ENCODE measurements at regions of chr18 and their contacts with region 1.

Region 1: DNA sequence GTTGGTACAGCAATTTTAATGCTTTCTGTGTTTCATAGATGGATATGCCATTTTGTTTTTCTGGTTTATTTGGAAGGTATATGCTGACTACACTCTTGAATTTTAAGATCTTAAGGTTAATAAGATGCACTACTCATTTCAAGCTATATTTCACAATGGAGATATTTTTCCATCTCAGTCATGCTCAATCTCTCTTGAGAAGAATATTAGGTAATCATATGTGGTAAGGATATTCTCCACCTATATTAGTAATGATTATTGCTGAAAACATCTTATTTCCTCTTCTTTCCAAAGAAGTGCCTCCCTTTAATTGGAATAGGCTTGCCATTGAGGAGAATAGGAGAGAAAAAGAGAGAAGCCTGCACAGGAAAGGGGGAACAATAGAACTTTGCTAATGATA is 40.1 kb downstream of the EPB41L3 start:
- DNase-seq: no peak
- ATAC-seq: no peak
- H3K4me3 ChIP-seq: no peak overlapping the region
- H3K27ac ChIP-seq: no peak overlapping the region
- H3K4me1 ChIP-seq: peaks cover 0 to 15% (median 0%) of the 10 kb centered on the region in 12 donors
- H3K27me3 ChIP-seq: no peaks in the 10 kb centered on the region
- CTCF ChIP-seq: no peak
- POLR2A ChIP-seq: no peak

Region 2: GRCh38 chr18:5469340-5469739 is 34.4 kb before region 1 on chr18:
- intact Hi-C with region 1: loop called in 1 of 10 experiments (anchors 2 kb)
- DNase-seq: no peak
- ATAC-seq: no peak
- H3K4me3 ChIP-seq: no peak overlapping the region
- H3K27ac ChIP-seq: no peak overlapping the region
- H3K4me1 ChIP-seq: peaks cover 0 to 26% (median 0%) of the 10 kb centered on the region in 12 donors
- H3K27me3 ChIP-seq: peaks cover 0 to 9% (median 0%) of the 10 kb centered on the region in 9 donors
- CTCF ChIP-seq: no peak
- POLR2A ChIP-seq: no peak

Region 3: GRCh38 chr18:5568416-5568815 is 64.7 kb after region 1 on chr18:
- intact Hi-C with region 1: loop called in 1 of 10 experiments (anchors 10 kb)
- DNase-seq: no peak
- ATAC-seq: no peak
- H3K4me3 ChIP-seq: no peak overlapping the region
- H3K27ac ChIP-seq: no peak overlapping the region
- H3K4me1 ChIP-seq: peaks cover 0 to 10% (median 0%) of the 10 kb centered on the region in 12 donors
- H3K27me3 ChIP-seq: no peaks in the 10 kb centered on the region
- CTCF ChIP-seq: no peak
- POLR2A ChIP-seq: no peak

Measured in heart left ventricle (tissue), 16 donors.